ENCODE measurements at regions of chr15 and their contacts with region 1.

Region 1: DNA sequence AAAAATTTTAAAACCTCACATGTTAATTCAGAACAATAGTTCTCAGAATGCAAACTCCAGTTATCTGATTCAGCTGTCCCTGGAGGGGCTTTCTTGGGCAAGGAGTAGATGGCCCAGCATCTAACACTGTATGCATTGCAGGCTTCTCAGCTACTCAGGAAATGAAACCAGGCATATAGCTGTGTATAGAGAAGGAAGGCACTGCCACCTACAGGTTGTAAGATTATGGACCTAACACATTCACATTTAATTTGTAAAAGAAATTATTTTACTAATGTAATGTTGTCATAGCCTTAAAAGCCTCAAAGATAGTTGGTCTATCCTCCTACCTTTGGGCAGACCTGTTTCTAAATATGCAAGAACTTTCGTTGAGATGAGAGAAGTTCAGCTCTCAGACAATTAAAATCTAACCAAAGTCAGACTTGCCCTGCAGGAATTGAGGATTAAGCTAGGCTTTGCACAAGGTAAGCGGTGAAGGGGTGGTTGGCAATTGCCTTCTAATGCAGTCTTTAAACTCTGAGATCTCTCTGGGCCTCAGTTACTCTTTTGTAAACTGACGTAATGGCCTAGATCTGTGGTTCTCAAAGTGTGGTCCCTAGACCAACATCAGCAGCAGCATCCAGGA is 132.8 kb upstream of the SLC24A5 start:
- DNase-seq: peak; percentile 70
- ATAC-seq: peak; percentile 99
- H3K4me3 ChIP-seq: no peak overlapping the region
- H3K27ac ChIP-seq: no peak overlapping the region
- H3K4me1 ChIP-seq: no peaks in the 10 kb centered on the region
- H3K27me3 ChIP-seq: no peaks in the 10 kb centered on the region; the same call in 1 of the 2 replicates
- CTCF ChIP-seq: peak; percentile 88
- POLR2A ChIP-seq: no peak
- RAD21 ChIP-seq: peak; percentile 90

Region 2: DNA sequence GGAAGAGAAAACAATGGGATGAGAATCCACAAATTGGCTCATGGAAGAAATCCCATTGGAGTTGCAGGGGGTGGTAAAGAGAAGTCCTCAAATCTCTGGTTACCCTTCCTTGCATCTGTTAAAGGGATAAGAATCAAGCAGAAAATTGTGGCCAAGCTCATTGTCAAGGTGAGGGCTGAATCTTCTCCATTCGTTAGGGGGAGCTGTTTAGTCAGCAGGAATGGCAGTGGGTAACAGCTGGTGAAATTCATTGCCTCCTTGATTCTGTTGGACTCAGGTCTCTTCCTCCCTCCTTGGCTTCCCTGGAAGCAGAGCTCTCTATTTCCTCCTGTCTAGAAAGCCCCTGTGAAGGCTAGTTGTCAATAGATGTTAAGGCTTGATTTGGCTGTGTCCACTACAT is 613.8 kb before region 1 on chr15:
- CTCF ChIA-PET with region 1: interaction called, 3 read pairs
- POLR2A ChIA-PET with region 1: no interaction called
- dilution Hi-C with region 1: no loop called
- in situ Hi-C with region 1: no loop called
- intact Hi-C with region 1: loop called (anchors 5 kb)
- DNase-seq: peak; percentile 42
- ATAC-seq: peak; percentile 48; the same call in 1 of the 2 replicates
- H3K4me3 ChIP-seq: no peak overlapping the region
- H3K27ac ChIP-seq: no peak overlapping the region
- H3K4me1 ChIP-seq: peaks cover 3% of the 10 kb centered on the region; the same call in 1 of the 2 replicates
- H3K27me3 ChIP-seq: no peaks in the 10 kb centered on the region
- CTCF ChIP-seq: peak; percentile 59
- POLR2A ChIP-seq: no peak
- RAD21 ChIP-seq: peak; percentile 74

Region 3: GRCh38 chr15:47470983-47471382 is 517.0 kb before region 1 on chr15:
- CTCF ChIA-PET with region 1: no interaction called
- POLR2A ChIA-PET with region 1: no interaction called
- dilution Hi-C with region 1: no loop called
- in situ Hi-C with region 1: no loop called
- intact Hi-C with region 1: loop called (anchors 2 kb)
- DNase-seq: peak; percentile 67
- ATAC-seq: peak; percentile 33
- H3K4me3 ChIP-seq: no peak overlapping the region
- H3K27ac ChIP-seq: no peak overlapping the region
- H3K4me1 ChIP-seq: peaks cover 3% of the 10 kb centered on the region
- H3K27me3 ChIP-seq: no peaks in the 10 kb centered on the region
- CTCF ChIP-seq: no peak
- POLR2A ChIP-seq: no peak
- RAD21 ChIP-seq: no peak

Region 4: GRCh38 chr15:48250640-48251076 is 262.6 kb after region 1 on chr15:
- CTCF ChIA-PET with region 1: interaction called, 3 read pairs
- POLR2A ChIA-PET with region 1: no interaction called
- dilution Hi-C with region 1: no loop called
- in situ Hi-C with region 1: no loop called
- intact Hi-C with region 1: loop called (anchors 1 kb)
- DNase-seq: peak; percentile 79
- ATAC-seq: peak; percentile 82
- H3K4me3 ChIP-seq: no peak overlapping the region
- H3K27ac ChIP-seq: no peak overlapping the region
- H3K4me1 ChIP-seq: no peaks in the 10 kb centered on the region
- H3K27me3 ChIP-seq: peaks cover 6% of the 10 kb centered on the region
- CTCF ChIP-seq: peak; percentile 75
- POLR2A ChIP-seq: no peak
- RAD21 ChIP-seq: peak; percentile 77

Region 5: DNA sequence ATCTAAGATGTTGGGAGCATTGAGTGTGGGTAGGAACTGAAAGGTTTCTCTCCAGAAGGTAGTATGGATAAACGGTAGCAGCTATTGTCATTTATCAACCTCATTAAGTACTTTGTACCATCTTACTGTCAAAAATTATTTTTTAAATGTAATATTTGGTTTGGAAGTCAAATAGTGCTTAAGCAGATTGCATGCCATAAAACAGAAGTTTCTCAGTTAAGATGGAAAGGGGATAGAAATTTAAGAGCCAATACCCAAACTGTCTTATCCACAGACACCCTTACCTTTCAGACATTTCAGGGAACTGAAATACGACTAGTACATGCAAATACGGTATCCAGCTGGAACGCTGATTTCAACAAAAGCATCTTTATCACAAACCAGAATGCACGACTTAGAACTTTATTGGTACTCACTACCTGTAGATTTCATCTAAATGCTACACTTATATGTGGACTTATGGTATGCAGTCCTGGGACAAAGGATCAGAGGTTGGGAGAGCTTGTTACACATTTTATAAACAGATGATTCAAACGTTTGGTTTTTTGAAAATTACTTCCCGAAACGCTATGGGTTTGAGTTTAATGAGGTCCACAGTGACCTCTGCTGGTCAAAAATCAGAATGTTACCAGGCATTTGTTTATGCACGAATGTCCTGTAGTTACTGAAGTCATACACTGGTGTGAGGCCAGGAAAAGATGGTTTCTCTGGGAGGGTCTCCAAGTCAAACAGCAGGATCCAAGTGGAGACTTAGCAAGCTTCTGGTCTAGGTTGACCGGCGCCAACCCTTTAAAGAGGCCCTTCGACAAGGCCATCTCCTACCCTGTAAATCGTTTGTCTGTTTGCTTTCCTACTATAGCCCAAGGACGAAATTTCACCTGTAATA is 297.6 kb after region 1 on chr15:
- CTCF ChIA-PET with region 1: interaction called, 3 read pairs
- POLR2A ChIA-PET with region 1: no interaction called
- dilution Hi-C with region 1: no loop called
- in situ Hi-C with region 1: no loop called
- intact Hi-C with region 1: loop called (anchors 5 kb)
- DNase-seq: peak; percentile 92
- ATAC-seq: peak; percentile 91
- H3K4me3 ChIP-seq: no peak overlapping the region
- H3K27ac ChIP-seq: no peak overlapping the region
- H3K4me1 ChIP-seq: no peaks in the 10 kb centered on the region; the same call in none of the 2 replicates
- H3K27me3 ChIP-seq: no peaks in the 10 kb centered on the region; the same call in 1 of the 2 replicates
- CTCF ChIP-seq: peak; percentile 78
- POLR2A ChIP-seq: no peak
- RAD21 ChIP-seq: peak; percentile 72